Aorta (tissue), 5 donors: ENCODE measurements at regions of chr16 and their contacts with region 1.

Region 1: DNA sequence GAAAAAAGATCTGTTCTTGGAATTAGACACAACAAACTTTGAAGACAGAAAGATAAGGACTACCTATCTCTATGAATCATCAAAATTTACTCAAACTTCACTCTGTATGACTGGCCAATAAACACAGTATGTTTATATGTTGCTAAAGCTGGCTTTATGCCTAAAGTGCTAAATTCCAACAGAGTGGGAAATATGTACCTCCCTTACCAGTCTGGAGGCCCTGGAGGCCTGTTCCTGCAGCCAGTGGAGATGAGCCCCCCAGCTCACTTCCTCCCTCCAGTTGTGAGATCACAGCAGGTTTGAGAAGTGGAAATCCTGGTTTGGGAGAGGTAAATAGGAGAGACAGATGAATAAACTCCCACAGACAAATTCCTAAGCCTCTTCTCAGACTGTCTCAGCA is 9.0 kb downstream of the ZNF23 start:
- DNase-seq: no peak
- ATAC-seq: no peak
- H3K4me3 ChIP-seq: no peak overlapping the region
- H3K27ac ChIP-seq: no peak overlapping the region
- H3K4me1 ChIP-seq: no peaks in the 10 kb centered on the region
- H3K27me3 ChIP-seq: no peaks in the 10 kb centered on the region

Region 2: DNA sequence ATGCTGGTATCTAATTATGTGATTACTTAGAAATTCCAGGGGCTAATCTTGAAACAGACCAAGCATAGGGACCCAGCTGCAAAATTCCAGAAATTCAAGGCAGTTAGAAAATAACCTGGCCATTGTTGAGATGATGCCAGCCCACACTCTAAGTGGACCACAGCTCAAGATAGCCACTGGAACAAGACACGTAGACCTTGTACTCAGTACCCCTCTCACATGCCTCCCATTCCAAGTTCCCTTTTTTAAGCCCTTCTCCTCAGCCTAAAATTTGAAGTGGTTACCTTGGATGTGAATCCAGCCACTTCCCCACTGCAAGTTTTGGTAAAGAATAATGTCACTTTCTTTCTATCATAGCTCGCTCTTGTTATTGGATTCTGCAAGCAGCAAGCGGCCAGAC is 40.2 kb after region 1 on chr16:
- intact Hi-C with region 1: loop called in 1 of 2 experiments (anchors 5 kb)
- DNase-seq: no peak
- ATAC-seq: no peak
- H3K4me3 ChIP-seq: no peak overlapping the region
- H3K27ac ChIP-seq: no peak overlapping the region
- H3K4me1 ChIP-seq: no peaks in the 10 kb centered on the region
- H3K27me3 ChIP-seq: no peaks in the 10 kb centered on the region

Region 3: DNA sequence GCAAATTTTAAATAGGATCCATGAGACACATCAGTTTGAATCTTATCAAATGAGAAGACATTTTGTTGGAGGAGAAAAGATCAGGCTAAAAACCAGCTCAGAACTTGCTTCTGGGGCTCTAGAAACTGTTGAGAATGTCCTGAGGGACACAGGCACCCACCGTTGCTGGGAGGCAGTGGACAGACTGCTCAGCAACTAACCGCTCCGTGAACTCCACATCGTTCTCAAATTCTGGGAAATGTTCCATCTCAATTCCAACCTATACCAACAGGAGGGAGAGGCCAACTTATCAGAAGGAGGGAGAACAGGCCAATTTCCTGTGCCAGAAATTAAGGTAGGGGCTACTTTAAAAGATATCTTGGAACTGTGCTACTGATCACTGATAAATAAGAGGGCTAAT is 115.5 kb after region 1 on chr16:
- intact Hi-C with region 1: no loop called
- DNase-seq: no peak
- ATAC-seq: no peak
- H3K4me3 ChIP-seq: no peak overlapping the region
- H3K27ac ChIP-seq: no peak overlapping the region
- H3K4me1 ChIP-seq: no peaks in the 10 kb centered on the region
- H3K27me3 ChIP-seq: no peaks in the 10 kb centered on the region